ENCODE measurements at regions of chr11 and their contacts with region 1.

Region 1: GRCh38 chr11:134275534-134276395 is at the start of gene GLB1L3:
- DNase-seq: peak; percentile 62 to 83 (median 68)
- H3K4me3 ChIP-seq: peak within 1 kb of the TSS; percentile 83
- H3K4me3 Mint-ChIP-seq: peak within 1 kb of the TSS; percentile 87 to 98 (median 94)
- H3K27ac ChIP-seq: peak within 1 kb of the TSS; percentile 38
- H3K27ac Mint-ChIP-seq: peak within 1 kb of the TSS; percentile 40 to 95 (median 88)
- H3K4me1 ChIP-seq: peaks cover 34% of the 10 kb centered on the region
- H3K4me1 Mint-ChIP-seq: peaks cover 34 to 53% (median 53%) of the 10 kb centered on the region in 3 donors
- H3K27me3 ChIP-seq: no peaks in the 10 kb centered on the region
- H3K27me3 Mint-ChIP-seq: peaks cover 8 to 21% of the 10 kb centered on the region in 2 donors
- total RNA-seq, gene GLB1L3: 2.3 to 3.0 TPM

Region 2: DNA sequence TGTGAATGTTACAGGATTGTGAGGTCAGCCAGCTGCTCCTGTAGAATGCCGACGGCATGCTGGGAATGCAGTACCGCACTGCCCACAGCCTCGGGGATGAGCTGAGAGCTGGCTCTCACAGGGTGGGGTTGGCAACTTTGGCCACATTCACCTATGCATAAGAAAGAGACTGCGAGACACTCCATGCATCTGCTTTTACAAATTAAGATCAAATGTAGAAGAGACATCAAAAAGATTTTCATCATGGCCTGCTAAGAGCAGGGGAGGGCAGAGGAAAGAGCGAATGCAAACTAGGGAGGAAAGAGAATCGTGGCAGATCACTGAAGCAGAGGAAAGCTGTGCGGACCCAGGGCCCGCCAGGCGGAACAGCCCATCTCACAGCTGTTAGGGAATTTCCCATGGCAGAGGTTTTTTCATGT is 380.7 kb before region 1 on chr11:
- CTCF ChIA-PET with region 1: no interaction called
- POLR2A ChIA-PET with region 1: no interaction called
- DNase-seq: no peak
- H3K4me3 ChIP-seq: no peak overlapping the region
- H3K4me3 Mint-ChIP-seq: no peak overlapping the region
- H3K27ac ChIP-seq: no peak overlapping the region
- H3K27ac Mint-ChIP-seq: no peak overlapping the region
- H3K4me1 ChIP-seq: no peaks in the 10 kb centered on the region
- H3K4me1 Mint-ChIP-seq: no peaks in the 10 kb centered on the region
- H3K27me3 ChIP-seq: no peaks in the 10 kb centered on the region
- H3K27me3 Mint-ChIP-seq: peaks cover 11 to 12% of the 10 kb centered on the region in 2 donors

Region 3: DNA sequence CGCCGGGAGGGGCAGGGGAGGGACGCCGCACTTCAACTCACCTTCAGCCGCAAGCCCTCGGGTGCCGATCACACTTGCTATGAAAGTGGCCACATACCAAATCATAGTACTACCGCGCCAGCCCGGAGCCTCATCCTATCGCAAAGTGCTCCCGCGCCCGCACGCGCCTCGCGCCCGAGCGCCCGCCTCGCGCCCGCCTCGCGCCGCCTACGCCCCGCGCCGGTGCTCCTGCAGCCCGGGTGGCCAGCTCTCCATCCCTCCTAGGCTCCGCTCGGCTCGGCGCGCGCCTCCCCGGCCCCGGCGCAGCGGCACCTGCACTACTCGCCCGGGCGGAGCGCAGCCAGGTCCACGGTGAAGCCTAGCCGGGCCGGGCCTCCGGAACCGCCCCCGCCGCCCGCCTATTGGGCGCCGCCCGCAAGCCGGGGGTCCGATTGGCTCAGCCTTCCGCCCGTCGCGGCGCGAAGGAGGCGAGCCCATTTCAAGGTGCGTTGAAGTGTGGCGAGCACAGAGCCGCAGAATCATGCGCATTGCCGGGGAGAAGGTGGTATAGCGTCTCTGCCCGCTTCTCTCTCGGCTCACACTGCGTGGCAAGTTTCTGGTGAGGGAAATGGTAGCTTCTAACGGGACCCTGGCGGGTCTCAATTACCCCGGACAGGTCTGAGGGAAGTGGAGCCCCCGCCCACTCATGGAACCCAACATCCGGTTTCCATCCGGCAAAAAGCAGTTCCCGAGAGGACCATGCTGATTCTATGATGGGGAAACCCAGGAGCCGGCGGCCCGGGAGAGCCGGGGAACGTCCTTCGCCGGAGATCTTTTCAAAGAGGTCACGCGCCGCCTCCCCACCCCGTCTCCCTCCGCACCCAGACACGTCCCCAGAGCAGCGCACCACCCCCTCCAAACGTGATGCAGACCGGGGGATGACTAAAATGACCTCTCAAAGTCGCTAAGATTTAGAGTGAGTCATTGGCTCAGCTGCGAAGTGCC is 318.8 kb before region 1 on chr11 and contains the start of gene IGSF9B:
- CTCF ChIA-PET with region 1: no interaction called
- POLR2A ChIA-PET with region 1: no interaction called
- DNase-seq: peak; percentile 83 to 93 (median 87)
- H3K4me3 ChIP-seq: peak within 1 kb of the TSS; percentile 85
- H3K4me3 Mint-ChIP-seq: peak within 1 kb of the TSS; percentile 90 to 97 (median 92)
- H3K27ac ChIP-seq: peak within 1 kb of the TSS; percentile 51
- H3K27ac Mint-ChIP-seq: peak within 1 kb of the TSS; percentile 48 to 95 (median 89)
- H3K4me1 ChIP-seq: peaks cover 33% of the 10 kb centered on the region
- H3K4me1 Mint-ChIP-seq: peaks cover 26 to 43% (median 41%) of the 10 kb centered on the region in 3 donors
- H3K27me3 ChIP-seq: peaks cover 14% of the 10 kb centered on the region
- H3K27me3 Mint-ChIP-seq: peaks cover 21 to 32% of the 10 kb centered on the region in 2 donors
- total RNA-seq, gene IGSF9B: 12.2 to 15.2 TPM

Region 4: DNA sequence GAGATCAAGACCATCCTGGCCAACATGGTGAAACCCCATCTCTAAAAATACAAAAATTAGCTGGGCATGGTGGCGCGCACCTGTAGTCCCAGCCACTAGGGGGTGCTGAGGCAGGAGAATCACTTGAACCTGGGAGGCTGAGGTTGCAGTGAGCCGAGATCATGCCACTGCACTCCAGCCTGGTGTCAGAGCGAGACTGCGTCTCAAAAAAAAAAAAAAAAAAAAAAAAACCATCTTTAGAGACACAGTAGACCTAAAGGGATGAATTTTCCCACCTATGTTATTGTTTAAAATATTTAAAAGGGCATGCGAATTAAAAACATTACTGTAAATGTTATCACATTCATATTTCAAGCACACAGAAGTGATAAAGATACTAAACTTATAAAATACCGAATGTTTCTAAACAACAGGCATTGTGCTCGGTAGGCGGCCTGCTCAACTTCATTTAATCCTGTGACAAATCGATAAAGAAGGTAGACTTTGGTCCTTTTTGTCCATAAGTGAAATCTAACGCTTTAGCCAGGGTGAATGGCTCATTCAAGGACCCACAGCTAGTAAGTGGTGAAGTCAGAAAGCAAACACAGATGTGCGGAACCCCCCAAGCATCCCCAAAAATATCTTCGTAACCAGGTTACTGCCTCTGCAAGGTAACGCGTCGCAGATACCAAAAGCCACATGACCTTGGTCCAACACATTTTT is 68.1 kb before region 1 on chr11:
- CTCF ChIA-PET with region 1: interaction called, 12 read pairs
- POLR2A ChIA-PET with region 1: no interaction called
- DNase-seq: peak; percentile 46 to 76 (median 51)
- H3K4me3 ChIP-seq: no peak overlapping the region
- H3K4me3 Mint-ChIP-seq: no peak overlapping the region
- H3K27ac ChIP-seq: no peak overlapping the region
- H3K27ac Mint-ChIP-seq: peak overlapping the region in 2 of 8 donors; percentile 36 to 43
- H3K4me1 ChIP-seq: no peaks in the 10 kb centered on the region
- H3K4me1 Mint-ChIP-seq: peaks cover 0 to 7% (median 5%) of the 10 kb centered on the region in 3 donors
- H3K27me3 ChIP-seq: no peaks in the 10 kb centered on the region
- H3K27me3 Mint-ChIP-seq: no peaks in the 10 kb centered on the region

Region 5: DNA sequence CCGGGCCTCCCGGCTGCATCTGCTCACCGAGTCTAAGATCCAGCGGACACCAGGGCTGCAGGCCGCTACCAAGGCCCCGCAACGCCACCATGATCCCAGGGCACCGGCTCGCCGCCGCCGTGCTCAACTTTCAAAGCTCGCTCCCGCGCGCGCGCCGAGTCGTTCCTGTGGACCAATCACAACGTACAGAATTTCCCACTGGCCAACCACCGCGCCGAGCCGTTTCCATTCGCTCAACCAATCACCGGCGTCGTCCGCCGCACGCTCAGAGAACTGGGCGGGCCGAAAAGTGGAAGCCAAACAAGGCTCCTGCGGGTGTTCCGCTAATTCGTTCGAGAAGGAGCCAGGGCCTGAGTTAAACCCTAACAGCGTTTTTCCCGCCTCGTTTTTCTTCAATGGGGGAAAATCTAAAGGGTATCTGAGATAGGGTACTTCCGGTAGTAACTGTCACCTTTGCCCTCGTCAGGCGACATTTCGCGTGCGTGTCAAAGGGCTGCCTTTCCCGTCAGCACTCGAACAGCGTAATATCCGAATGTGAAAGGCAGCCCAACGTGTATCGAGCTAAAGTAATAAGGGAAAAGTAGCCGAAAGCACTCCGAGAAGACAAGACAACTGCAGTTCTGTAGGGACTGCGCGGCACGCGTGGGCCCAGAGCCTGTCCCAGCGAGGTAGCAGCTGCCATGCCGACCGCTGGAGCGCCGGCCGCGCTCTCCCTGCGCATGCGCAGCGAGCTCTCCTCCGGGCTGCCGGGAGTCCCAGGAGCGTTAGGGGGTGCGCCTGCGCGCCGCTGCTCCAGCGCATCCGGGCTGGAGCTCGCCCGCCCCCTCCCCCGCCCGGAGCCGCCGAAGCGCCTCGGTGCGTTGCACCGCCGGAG is 51.7 kb before region 1 on chr11 and contains the starts of genes NCAPD3 and VPS26B:
- CTCF ChIA-PET with region 1: interaction called, 17 read pairs
- POLR2A ChIA-PET with region 1: interaction called, 11 read pairs
- DNase-seq: peak; percentile 94 to 97 (median 95)
- H3K4me3 ChIP-seq: peak within 1 kb of the TSS; percentile 87
- H3K4me3 Mint-ChIP-seq: peak within 1 kb of the TSS; percentile 94 to 99 (median 97)
- H3K27ac ChIP-seq: peak within 1 kb of the TSS; percentile 87
- H3K27ac Mint-ChIP-seq: peak within 1 kb of the TSS; percentile 97 to 99 (median 98)
- H3K4me1 ChIP-seq: peaks cover 40% of the 10 kb centered on the region
- H3K4me1 Mint-ChIP-seq: peaks cover 57 to 70% (median 67%) of the 10 kb centered on the region in 3 donors
- H3K27me3 ChIP-seq: no peaks in the 10 kb centered on the region
- H3K27me3 Mint-ChIP-seq: peaks cover 0 to 5% of the 10 kb centered on the region in 2 donors
- total RNA-seq, gene NCAPD3: 76.7 to 80.4 TPM
- total RNA-seq, gene VPS26B: 36.6 to 36.7 TPM

Region 6: DNA sequence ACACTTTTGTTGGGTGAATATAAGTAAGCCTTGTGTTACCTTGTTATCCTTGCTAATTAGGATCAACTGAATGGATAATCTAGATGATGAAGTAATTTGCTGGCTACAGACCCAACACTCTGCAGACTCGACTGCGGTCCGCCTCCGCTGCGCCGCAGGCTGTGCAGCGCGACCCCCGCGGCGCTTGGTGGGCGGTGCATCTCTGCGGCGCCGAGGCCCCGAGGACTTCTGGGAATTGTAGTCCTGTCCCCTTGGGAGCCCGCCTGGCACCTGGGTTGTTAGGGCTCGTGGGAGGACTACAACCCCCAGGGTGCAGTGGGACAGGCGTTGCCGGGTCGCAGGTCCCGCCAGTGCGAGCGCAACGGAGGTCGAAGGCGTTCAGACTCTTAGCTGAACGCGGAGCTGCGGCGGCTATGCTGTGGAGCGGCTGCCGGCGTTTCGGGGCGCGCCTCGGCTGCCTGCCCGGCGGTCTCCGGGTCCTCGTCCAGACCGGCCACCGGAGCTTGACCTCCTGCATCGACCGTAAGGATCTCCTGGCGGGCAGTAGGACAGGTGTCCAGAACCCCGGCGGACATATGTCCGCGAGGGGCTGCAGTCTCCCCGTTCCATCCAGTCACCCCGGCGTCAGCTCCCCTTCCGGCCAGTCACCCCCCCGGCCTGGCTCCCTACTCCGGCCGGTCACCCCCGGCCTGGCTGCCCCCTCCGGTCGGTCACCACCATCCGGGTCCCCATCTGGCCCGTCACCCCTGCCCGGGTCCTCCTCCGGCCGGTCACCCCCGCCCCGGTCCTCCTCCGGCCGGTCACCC is 22.4 kb before region 1 on chr11 and contains the starts of genes ACAD8 and THYN1:
- CTCF ChIA-PET with region 1: interaction called, 10 read pairs
- POLR2A ChIA-PET with region 1: interaction called, 7 read pairs
- DNase-seq: peak; percentile 94 to 98 (median 95)
- H3K4me3 ChIP-seq: peak within 1 kb of the TSS; percentile 91
- H3K4me3 Mint-ChIP-seq: peak within 1 kb of the TSS; percentile 88 to 99 (median 96)
- H3K27ac ChIP-seq: peak within 1 kb of the TSS; percentile 53
- H3K27ac Mint-ChIP-seq: peak within 1 kb of the TSS; percentile 76 to 97 (median 90)
- H3K4me1 ChIP-seq: peaks cover 25% of the 10 kb centered on the region
- H3K4me1 Mint-ChIP-seq: peaks cover 30 to 47% (median 40%) of the 10 kb centered on the region in 3 donors
- H3K27me3 ChIP-seq: no peaks in the 10 kb centered on the region
- H3K27me3 Mint-ChIP-seq: no peaks in the 10 kb centered on the region
- total RNA-seq, gene ACAD8: 27.1 to 28.2 TPM
- total RNA-seq, gene THYN1: 58.9 to 68.4 TPM

Region 7: DNA sequence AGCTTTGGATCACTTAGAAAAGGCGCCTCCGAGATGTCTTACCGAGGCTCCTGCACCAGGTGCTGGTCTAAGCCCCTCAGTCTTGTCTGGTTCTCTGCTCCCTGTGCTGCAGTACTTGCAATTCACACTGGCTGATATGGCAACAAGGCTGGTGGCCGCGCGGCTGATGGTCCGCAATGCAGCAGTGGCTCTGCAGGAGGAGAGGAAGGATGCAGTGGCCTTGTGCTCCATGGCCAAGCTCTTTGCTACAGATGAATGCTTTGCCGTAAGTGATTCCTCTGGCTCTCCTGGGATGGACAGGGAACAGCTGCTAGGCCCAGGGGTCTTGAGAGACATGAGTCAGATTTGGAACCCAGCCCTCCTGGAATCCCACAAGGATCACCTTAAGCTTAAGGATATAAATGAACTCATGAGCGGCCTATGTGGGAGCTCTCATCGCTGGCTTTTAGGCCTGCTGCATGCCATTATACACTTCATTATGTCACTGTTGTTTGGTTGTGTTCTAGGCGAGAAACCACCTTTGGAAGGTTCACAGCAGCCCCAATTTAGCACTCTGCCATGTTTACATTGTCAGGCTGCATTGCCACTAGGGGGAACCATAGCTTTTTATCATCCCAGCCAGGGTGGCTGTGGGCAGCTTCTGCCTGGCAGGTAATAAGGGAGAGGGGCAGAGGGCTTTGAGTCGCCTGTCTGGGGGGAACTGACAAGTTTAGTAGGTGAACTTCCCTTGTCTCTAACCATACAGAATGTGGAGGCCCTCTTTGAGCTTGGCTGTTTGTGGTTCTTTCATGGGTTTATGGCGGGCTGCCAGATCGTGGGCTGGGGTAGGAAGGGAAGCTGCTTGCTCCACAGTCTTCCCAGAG is 13.9 kb before region 1 on chr11:
- CTCF ChIA-PET with region 1: interaction called, 58 read pairs
- POLR2A ChIA-PET with region 1: no interaction called
- DNase-seq: peak in 2 of 5 donors; percentile 28 to 53
- H3K4me3 ChIP-seq: no peak overlapping the region
- H3K4me3 Mint-ChIP-seq: no peak overlapping the region
- H3K27ac ChIP-seq: no peak overlapping the region
- H3K27ac Mint-ChIP-seq: peak overlapping the region in 1 of 8 donors; percentile 24
- H3K4me1 ChIP-seq: no peaks in the 10 kb centered on the region
- H3K4me1 Mint-ChIP-seq: peaks cover 0 to 4% (median 0%) of the 10 kb centered on the region in 3 donors
- H3K27me3 ChIP-seq: no peaks in the 10 kb centered on the region
- H3K27me3 Mint-ChIP-seq: no peaks in the 10 kb centered on the region